ENCODE measurements at regions of chr19 and their contacts with region 1.

Region 1: DNA sequence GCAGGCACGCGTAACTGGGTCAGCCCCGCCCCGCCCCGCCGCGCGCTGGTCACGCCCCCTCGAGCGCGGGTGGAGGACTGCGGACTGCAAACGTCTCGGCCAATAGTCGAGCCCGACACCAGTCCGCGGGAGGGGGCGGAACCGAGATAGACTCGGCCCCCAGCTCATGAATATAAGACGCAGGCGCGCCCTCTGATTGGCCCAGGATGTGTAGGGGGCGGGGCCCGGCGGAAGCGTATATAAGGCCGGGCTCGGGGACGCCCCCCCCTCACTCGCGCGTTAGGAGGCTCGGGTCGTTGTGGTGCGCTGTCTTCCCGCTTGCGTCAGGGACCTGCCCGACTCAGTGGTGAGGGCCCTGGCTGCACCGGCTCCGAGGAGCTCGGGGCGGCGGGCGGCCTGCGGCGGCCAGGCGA is at the start of gene CIRBP:
- DNase-seq: peak; percentile 100
- ATAC-seq: peak; percentile 88
- H3K4me3 ChIP-seq: peak within 1 kb of the TSS; percentile 54 to 91
- H3K27ac ChIP-seq: peak within 1 kb of the TSS; percentile 77 to 93
- H3K4me1 ChIP-seq: no peaks in the 10 kb centered on the region
- H3K27me3 ChIP-seq: no peaks in the 10 kb centered on the region
- total RNA-seq, gene CIRBP: 391 to 397 TPM

Region 2: DNA sequence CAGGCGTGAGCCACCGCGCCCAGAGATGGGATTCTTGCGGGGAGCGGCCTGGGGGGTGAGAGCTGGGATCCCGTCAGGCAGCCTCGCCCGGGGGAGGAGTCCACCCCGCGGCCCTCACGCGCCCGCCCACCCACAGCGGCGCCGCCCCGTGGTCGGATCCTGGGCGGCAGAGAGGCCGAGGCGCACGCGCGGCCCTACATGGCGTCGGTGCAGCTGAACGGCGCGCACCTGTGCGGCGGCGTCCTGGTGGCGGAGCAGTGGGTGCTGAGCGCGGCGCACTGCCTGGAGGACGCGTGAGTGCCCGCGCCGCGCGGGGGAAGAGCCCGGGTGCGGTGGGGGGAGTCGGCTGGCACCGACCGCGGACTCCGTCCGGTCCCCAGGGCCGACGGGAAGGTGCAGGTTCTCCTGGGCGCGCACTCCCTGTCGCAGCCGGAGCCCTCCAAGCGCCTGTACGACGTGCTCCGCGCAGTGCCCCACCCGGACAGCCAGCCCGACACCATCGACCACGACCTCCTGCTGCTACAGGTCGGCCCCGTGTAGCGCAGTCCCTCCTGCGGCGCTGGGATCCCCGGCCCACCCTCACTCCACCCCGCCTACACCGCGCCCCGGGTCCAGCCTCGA is 408.5 kb before region 1 on chr19:
- intact Hi-C with region 1: no loop called
- DNase-seq: peak in 1 of 2 donors; percentile 76
- ATAC-seq: peak; percentile 74
- H3K4me3 ChIP-seq: no peak overlapping the region
- H3K27ac ChIP-seq: no peak overlapping the region
- H3K4me1 ChIP-seq: no peaks in the 10 kb centered on the region
- H3K27me3 ChIP-seq: peaks cover 0 to 3% of the 10 kb centered on the region in 2 donors

Region 3: DNA sequence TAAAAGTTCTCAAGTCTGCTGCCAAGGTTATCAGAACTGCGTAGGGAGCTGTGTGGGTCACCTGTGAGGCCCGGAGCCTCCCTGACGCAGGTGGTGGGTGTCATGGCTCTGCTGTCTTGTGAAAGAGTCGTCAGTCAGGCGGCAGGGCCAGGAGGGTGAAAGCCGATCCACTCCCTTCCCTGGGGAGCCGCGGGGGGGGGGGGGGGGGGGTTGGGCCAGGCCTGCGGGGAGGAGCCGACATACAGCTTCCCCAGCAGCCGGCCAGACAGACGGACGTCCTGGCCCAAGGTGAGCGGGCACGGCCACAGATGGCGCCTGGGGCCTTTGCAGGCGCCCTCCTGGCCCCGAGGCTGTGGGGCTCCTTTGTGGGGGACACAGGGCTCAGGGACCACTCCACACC is 107.4 kb before region 1 on chr19:
- intact Hi-C with region 1: no loop called
- DNase-seq: no peak
- ATAC-seq: no peak
- H3K4me3 ChIP-seq: no peak overlapping the region
- H3K27ac ChIP-seq: no peak overlapping the region
- H3K4me1 ChIP-seq: no peaks in the 10 kb centered on the region
- H3K27me3 ChIP-seq: no peaks in the 10 kb centered on the region

Region 4: DNA sequence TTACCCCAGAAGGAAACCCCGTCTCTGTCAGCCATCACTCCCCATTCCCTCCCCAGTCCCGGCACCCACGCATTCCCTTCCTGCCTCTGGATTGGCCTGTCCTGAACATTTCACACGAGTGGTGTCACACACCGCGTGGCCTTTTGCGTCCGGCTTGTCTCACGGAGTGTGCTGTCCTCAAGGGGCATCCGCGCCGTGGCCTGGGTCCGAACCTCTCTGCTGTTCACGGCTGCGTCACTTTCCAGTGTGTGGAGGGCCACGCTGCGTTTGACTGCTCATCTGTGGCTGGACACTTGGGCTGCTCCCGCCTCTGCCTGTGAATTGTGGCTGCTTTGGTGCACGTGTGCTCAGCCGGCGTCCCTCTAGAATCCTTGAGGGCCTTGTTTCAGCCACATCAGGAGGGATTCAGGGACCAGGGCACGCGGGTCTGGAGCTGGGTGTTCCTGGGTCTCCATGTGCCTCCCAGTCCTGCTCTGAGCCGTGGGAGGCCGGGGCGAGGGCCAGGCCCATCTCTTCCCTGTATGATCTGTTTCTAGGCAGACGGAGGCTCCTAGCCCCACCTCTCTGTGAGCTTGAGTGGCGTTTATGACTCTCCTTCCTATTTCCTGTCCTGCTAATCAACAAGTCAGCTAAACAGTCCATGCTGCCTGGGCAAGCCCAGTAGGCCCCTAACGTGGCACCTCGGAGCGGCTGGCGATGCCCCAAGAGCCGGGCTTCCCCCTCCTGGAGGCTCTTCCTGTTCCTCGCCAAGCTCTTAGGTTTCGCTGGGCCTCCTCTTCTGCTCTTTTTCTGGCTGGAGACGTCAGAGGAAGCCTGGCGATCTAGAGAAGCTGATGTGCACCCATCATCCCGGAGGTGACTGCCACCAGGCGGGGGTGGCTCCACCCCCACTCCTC is 55.4 kb before region 1 on chr19:
- intact Hi-C with region 1: loop called in 1 of 2 experiments (anchors 2 kb)
- DNase-seq: peak; percentile 91 to 93
- ATAC-seq: peak; percentile 51
- H3K4me3 ChIP-seq: no peak overlapping the region
- H3K27ac ChIP-seq: peak overlapping the region; percentile 20 to 98
- H3K4me1 ChIP-seq: no peaks in the 10 kb centered on the region
- H3K27me3 ChIP-seq: no peaks in the 10 kb centered on the region

Region 5: DNA sequence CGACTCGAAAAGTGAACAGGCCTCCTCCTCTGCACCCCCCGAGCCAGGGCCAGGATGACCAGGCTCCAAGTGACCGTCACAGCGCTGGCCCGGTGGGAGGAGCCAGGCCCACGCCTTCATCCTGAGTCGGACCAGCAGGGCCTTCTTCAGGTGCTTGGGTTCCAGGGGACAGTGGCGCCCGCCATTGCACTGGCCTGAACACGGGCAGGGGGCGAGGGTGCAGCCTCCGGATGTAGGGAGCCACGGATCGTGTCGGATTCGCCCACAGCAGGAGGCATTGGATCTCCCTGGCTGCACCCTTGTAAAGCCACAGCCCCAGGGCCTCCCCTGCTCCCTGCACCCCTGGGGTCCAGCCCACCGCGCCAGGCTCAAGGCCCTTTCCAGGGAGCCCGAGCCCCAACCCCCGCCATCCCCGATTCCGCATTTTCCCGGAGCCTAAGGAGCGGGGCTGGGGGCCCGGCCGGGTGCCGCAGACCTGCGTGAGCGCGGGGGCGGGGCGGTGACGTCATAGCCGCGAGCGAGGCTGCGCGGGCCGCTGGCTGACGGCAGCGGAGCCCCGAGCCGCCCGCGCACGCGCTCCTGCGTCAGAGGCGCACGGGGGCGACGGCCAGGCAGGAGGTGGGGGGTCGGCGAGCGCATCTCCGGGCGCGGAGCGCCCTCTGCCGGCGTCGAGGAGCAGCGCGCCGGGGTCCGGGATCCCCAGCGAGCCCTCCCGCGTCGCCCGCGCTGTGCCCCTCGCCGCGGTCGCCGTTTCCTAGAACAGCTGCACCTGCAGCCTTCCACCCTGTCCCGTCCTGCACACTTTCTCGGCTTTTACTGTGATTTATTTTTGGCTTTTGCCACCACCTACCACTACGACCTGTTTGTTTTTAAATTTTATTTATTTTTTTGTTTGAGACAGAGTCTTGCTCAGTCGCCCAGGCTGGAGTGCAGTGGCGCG is 29.0 kb before region 1 on chr19:
- intact Hi-C with region 1: loop called (anchors 1 kb)
- DNase-seq: peak; percentile 91 to 97
- ATAC-seq: peak; percentile 76
- H3K4me3 ChIP-seq: no peak overlapping the region
- H3K27ac ChIP-seq: peak overlapping the region; percentile 63 to 64
- H3K4me1 ChIP-seq: no peaks in the 10 kb centered on the region
- H3K27me3 ChIP-seq: no peaks in the 10 kb centered on the region

Region 6: DNA sequence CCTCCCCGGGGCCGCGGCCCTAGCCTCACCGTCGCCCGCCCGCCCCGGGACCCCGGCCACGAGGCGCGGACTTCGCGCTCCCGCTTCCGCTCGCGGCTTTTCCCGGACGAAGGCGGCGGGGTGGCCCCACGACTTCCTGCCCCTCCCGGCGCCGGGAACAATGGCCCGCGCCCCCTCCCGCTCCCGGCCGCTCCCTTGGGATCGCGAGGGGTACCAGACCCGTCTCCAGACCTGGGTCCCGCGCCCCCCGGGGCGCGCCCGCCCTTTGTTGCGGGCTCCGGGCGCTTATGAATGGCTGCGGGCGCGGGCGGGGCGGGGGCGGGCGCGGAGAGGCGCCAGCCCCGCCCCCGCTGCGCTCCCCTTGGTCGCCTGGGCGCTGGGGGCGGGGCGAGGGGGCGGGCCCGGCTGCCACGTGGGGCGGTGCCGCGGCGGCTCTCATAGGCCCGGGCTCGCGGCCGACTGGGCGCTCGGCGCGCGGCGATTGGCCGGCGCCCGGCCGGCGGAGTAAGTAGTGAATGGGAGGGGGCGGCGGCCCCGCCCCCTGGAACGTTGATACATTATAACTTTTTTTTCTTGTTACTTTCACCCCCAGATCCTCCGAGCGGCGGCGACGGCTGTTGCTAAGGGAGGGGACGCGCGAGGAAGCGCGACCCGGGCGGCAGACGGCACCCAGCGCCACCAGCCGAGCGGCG is 19.6 kb before region 1 on chr19:
- intact Hi-C with region 1: loop called (anchors 1 kb)
- DNase-seq: peak; percentile 96
- ATAC-seq: peak; percentile 36
- H3K4me3 ChIP-seq: peak overlapping the region; percentile 87 to 93
- H3K27ac ChIP-seq: peak overlapping the region; percentile 92 to 94
- H3K4me1 ChIP-seq: no peaks in the 10 kb centered on the region
- H3K27me3 ChIP-seq: peaks cover 0 to 2% of the 10 kb centered on the region in 2 donors